K562 (cell line): ENCODE measurements at regions of chr6 and their contacts with region 1.

Region 1: DNA sequence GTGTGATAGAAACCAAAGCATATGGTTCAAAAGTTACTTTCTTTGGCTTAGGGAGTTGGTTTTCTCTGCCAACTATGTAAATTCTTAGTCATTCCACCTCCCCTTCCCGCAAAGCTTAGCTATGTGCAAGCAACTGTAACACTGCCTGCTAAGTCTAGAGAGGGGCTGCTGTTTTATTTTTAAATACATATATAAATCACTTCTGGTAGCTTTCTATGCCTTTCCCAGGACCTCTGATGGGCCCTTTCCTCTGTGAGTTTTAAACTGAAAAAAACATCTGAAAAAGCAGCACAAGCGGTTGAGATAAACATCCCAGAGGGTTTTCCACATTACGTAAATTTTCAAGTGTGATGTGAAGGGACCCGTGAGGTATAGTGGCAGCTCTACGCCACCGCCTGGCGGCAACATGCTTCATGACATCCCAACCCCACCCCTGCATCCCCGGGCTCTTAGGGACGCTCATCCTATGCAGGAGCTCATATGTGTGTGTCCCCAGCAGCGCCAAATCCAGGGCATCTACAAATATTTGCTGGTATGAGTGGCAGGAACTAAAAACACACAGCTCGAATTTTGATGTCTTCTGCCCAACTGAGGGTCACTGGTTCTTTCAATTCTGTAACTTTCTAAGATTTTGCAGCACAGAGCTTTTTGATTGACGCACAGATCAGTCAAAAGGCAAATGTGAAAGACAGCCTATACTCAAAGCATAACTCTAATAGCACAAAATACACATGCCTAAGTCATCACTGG is 12.7 kb downstream of the SAYSD1 start:
- DNase-seq: peak; percentile 79 to 89 (median 85)
- ATAC-seq: peak; percentile 99
- H3K4me3 ChIP-seq: no peak overlapping the region
- H3K27ac ChIP-seq: no peak overlapping the region
- H3K4me1 ChIP-seq: no peaks in the 10 kb centered on the region
- H3K27me3 ChIP-seq: peaks cover 5 to 10% of the 10 kb centered on the region in 2 experiments; a peak in 2 of 5 replicates
- CTCF ChIP-seq: peak; percentile 88 to 91 (median 91)
- EP300 ChIP-seq: no peak
- POLR2A ChIP-seq: no peak
- RAD21 ChIP-seq: peak; percentile 77 to 92

Region 2: DNA sequence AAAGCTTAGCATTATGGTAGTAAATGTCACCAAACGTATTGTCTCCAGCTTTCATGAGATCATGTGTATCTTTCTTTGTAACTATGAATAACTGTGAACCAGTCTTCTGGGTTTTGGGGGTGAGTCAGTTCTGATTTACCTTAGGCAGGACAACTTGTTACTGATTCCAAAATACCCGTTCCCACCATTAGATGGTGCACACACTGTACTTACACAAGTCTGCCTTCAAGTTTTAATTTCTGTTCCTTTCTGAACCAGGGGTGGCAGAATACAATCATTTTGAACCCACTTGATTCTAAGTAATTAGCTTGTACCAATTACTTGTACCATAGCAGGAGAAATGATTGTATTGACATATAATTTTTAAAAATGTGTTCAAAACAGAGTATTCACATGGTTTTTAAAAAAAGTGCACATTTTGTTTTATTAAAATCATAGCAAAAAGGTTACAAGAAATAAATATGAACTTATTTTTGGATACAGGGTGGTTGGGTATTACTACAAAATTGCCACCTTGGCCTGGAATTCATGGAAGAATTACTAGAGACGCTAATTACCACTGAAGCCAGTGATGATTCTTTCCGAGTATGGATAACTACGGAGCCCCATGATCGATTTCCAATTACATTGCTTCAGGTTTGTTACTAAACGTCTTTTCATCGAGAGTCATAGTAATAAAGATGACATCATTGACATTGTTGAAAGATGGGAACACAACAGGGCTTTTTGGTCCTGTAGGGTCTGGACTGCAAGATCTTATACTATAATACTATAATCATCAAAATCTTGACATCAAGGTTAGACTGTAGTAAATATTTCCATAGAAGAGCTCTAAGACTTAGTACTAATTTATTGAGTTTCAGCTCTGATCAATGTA is 128.8 kb before region 1 on chr6:
- CTCF ChIA-PET with region 1: interaction called, 16 read pairs
- POLR2A ChIA-PET with region 1: interaction called, 3 read pairs
- in situ Hi-C with region 1: no loop called
- intact Hi-C with region 1: no loop called
- DNase-seq: peak; percentile 58 to 78 (median 65)
- ATAC-seq: peak; percentile 97
- H3K4me3 ChIP-seq: no peak overlapping the region
- H3K27ac ChIP-seq: no peak overlapping the region
- H3K4me1 ChIP-seq: peaks cover 0 to 4% of the 10 kb centered on the region in 2 experiments; a peak in 2 of 5 replicates
- H3K27me3 ChIP-seq: peaks cover 0 to 6% of the 10 kb centered on the region in 2 experiments; a peak in 2 of 5 replicates
- CTCF ChIP-seq: peak; percentile 81 to 99 (median 97)
- EP300 ChIP-seq: no peak
- POLR2A ChIP-seq: no peak
- RAD21 ChIP-seq: peak; percentile 77 to 88

Region 3: GRCh38 chr6:39003072-39003471 is 99.2 kb before region 1 on chr6:
- CTCF ChIA-PET with region 1: interaction called, 4 read pairs
- POLR2A ChIA-PET with region 1: interaction called, 18 read pairs
- in situ Hi-C with region 1: no loop called
- intact Hi-C with region 1: loop called (anchors 1 kb)
- DNase-seq: peak; percentile 28 to 67 (median 46)
- ATAC-seq: peak; percentile 71
- H3K4me3 ChIP-seq: no peak overlapping the region
- H3K27ac ChIP-seq: no peak overlapping the region
- H3K4me1 ChIP-seq: peaks cover 6 to 16% of the 10 kb centered on the region in 2 experiments
- H3K27me3 ChIP-seq: peaks cover 19 to 23% of the 10 kb centered on the region in 2 experiments
- CTCF ChIP-seq: peak; percentile 73 to 78 (median 76)
- EP300 ChIP-seq: no peak
- POLR2A ChIP-seq: no peak
- RAD21 ChIP-seq: peak; percentile 62 to 90

Region 4: GRCh38 chr6:39114704-39115599 is 12.7 kb after region 1 on chr6 and contains the start of gene SAYSD1:
- CTCF ChIA-PET with region 1: no interaction called
- POLR2A ChIA-PET with region 1: interaction called, 23 read pairs
- in situ Hi-C with region 1: no loop called
- intact Hi-C with region 1: no loop called
- DNase-seq: peak; percentile 96 to 99 (median 98)
- ATAC-seq: peak; percentile 99
- H3K4me3 ChIP-seq: peak within 1 kb of the TSS; percentile 55
- H3K27ac ChIP-seq: peak within 1 kb of the TSS; percentile 87
- H3K4me1 ChIP-seq: peaks cover 6 to 10% of the 10 kb centered on the region in 2 experiments; a peak in 4 of 5 replicates
- H3K27me3 ChIP-seq: peaks cover 0 to 7% of the 10 kb centered on the region in 2 experiments; a peak in 3 of 5 replicates
- CTCF ChIP-seq: no peak
- EP300 ChIP-seq: peak; percentile 78
- POLR2A ChIP-seq: peak; percentile 95
- RAD21 ChIP-seq: no peak
- polyA plus RNA-seq, gene SAYSD1: 3.5 to 4.2 TPM

Region 5: DNA sequence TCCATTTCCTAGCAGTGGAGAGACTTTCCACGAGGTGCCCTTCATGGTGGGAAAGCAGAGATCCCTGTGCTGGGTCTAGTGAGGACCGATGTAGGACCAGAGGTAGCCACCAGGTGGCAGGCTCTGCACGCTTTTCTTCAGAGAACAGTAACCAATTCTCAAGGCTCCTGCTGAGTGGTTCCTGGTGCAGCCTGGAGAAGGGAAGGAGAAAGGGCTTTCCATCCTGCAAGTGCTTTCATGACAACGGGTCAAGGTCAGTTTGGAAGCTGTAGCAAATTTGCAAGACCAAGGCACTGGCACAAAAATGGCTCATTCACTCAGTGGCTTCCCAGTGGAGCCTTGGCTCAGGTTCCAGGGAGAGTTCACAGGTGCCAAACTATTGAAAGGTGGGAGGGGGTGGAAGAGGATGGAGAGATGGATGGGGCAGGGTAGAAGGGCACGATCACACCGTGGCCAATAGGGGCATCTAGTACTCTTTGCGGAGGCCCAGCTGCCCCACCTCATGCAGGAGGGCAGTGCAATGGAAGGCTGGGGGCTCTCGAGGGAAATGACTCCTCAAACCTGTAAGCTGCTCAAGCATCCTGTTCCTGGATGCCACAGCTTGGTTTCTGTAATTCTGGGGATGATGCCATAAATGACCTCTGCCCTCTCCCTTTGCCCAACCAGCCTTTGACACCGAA is 245.8 kb after region 1 on chr6:
- CTCF ChIA-PET with region 1: no interaction called
- POLR2A ChIA-PET with region 1: no interaction called
- in situ Hi-C with region 1: no loop called
- intact Hi-C with region 1: no loop called
- DNase-seq: peak; percentile 74 to 83 (median 80)
- ATAC-seq: peak; percentile 96
- H3K4me3 ChIP-seq: no peak overlapping the region
- H3K27ac ChIP-seq: no peak overlapping the region
- H3K4me1 ChIP-seq: no peaks in the 10 kb centered on the region
- H3K27me3 ChIP-seq: peaks cover 20 to 30% of the 10 kb centered on the region in 2 experiments; a peak in 4 of 5 replicates
- CTCF ChIP-seq: peak; percentile 83 to 96 (median 89)
- EP300 ChIP-seq: no peak
- POLR2A ChIP-seq: no peak
- RAD21 ChIP-seq: peak; percentile 65 to 84